K562 (cell line): ENCODE measurements at regions of chr1 and their contacts with region 1.

Region 1: DNA sequence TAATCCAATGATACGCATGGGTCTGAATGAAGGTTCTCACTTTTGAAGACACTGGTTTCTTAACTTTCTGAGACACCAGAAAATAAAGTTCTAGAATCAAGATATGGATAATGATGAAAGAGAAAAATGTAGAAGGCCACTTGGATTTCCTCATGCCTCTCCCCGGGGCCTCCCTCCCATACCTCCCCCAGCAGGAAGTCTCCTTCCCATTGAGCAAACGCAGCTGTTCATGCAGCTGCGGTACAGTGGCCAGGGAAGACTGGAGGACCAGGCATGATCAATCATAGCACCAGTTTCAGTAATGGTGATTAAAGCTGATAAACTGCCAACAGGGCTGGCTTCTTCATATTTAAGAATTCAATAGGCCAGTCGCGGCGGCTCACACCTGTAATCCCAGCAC is 10.9 kb upstream of the UBR4 start:
- DNase-seq: no peak
- ATAC-seq: no peak
- H3K4me3 ChIP-seq: no peak overlapping the region
- H3K27ac ChIP-seq: no peak overlapping the region
- H3K4me1 ChIP-seq: no peaks in the 10 kb centered on the region
- H3K27me3 ChIP-seq: no peaks in the 10 kb centered on the region; a peak in 1 of 5 replicates
- CTCF ChIP-seq: no peak
- EP300 ChIP-seq: no peak
- POLR2A ChIP-seq: no peak
- RAD21 ChIP-seq: no peak

Region 2: GRCh38 chr1:19139711-19140110 is 81.3 kb before region 1 on chr1:
- CTCF ChIA-PET with region 1: no interaction called
- POLR2A ChIA-PET with region 1: no interaction called
- in situ Hi-C with region 1: no loop called
- intact Hi-C with region 1: no loop called
- DNase-seq: no peak
- ATAC-seq: no peak
- H3K4me3 ChIP-seq: no peak overlapping the region
- H3K27ac ChIP-seq: no peak overlapping the region
- H3K4me1 ChIP-seq: no peaks in the 10 kb centered on the region
- H3K27me3 ChIP-seq: no peaks in the 10 kb centered on the region
- CTCF ChIP-seq: no peak
- EP300 ChIP-seq: no peak
- POLR2A ChIP-seq: no peak
- RAD21 ChIP-seq: no peak

Region 3: DNA sequence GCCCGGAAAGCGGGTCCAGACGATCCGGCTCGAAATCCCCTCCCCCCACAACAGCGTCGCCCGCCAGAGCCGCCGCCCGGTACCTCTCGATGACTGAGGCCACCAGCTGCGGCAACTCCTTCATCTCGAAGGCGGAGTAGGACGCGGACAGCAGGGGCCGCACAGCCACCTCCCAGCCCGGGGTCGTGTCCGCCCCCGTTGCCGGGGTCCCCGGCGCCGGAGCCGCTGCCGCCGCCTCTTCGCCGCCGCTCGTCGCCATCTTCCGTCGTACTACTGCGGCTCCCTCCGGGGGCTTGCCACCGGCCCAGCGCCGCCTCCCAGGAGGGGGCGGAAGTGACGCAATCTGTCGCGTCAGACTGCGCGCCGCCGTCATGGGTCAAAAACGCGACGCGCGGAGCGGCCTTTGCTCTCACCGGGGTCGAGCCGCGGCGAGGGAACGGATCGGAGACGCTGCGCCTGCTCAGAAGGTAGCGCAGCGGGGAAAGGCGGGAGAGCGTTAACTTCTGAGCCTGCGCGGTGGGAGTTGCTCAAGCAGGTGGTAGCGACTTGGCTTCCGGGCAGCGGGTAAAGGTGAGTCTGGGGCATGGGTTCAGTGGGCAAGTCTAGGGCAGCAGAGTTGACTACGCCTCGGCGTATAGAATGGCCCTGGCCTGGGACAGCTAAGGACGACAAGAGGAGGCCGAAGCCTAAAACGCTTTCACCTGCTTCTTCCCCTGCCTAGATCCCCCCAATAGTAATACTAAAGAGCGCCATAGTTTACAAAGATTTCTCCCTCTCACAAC is 10.8 kb before region 1 on chr1 and contains the start of gene UBR4:
- CTCF ChIA-PET with region 1: no interaction called
- POLR2A ChIA-PET with region 1: interaction called, 45 read pairs
- in situ Hi-C with region 1: no loop called
- intact Hi-C with region 1: no loop called
- DNase-seq: peak; percentile 93 to 100 (median 94)
- ATAC-seq: peak; percentile 88
- H3K4me3 ChIP-seq: peak within 1 kb of the TSS; percentile 84
- H3K27ac ChIP-seq: peak within 1 kb of the TSS; percentile 97
- H3K4me1 ChIP-seq: peaks cover 18 to 39% of the 10 kb centered on the region in 2 experiments
- H3K27me3 ChIP-seq: no peaks in the 10 kb centered on the region
- CTCF ChIP-seq: peak in 2 of 3 experiments; percentile 7 to 10; a peak in 1 of 6 replicates
- EP300 ChIP-seq: peak; percentile 64; the same call in 1 of the 2 replicates
- POLR2A ChIP-seq: peak; percentile 93
- RAD21 ChIP-seq: no peak; a peak in 1 of 4 replicates
- polyA plus RNA-seq, gene UBR4: 110 to 123 TPM

Region 4: GRCh38 chr1:19232526-19232851 is 11.5 kb after region 1 on chr1:
- CTCF ChIA-PET with region 1: no interaction called
- POLR2A ChIA-PET with region 1: interaction called, 13 read pairs
- in situ Hi-C with region 1: no loop called
- intact Hi-C with region 1: no loop called
- DNase-seq: no peak
- ATAC-seq: peak; percentile 72
- H3K4me3 ChIP-seq: no peak overlapping the region
- H3K27ac ChIP-seq: no peak overlapping the region
- H3K4me1 ChIP-seq: no peaks in the 10 kb centered on the region
- H3K27me3 ChIP-seq: no peaks in the 10 kb centered on the region
- CTCF ChIP-seq: peak in 2 of 3 experiments; percentile 35 to 38; a peak in 1 of 6 replicates
- EP300 ChIP-seq: no peak
- POLR2A ChIP-seq: no peak
- RAD21 ChIP-seq: 0 out of 4 replicates have a peak, but pooled peaks of 1 of the 2 experiments have one; percentile 6